GM12878 (cell line): ENCODE measurements at regions of chr7 and their contacts with region 1.

Region 1: GRCh38 chr7:26864309-26865093 is at the start of gene SKAP2:
- DNase-seq: peak; percentile 96
- ATAC-seq: peak; percentile 95
- H3K4me3 ChIP-seq: peak within 1 kb of the TSS; percentile 85
- H3K27ac ChIP-seq: peak within 1 kb of the TSS; percentile 70
- H3K4me1 ChIP-seq: no peaks in the 10 kb centered on the region
- H3K27me3 ChIP-seq: no peaks in the 10 kb centered on the region
- CTCF ChIP-seq: no peak
- EP300 ChIP-seq: no peak
- POLR2A ChIP-seq: peak; percentile 85
- RAD21 ChIP-seq: no peak
- polyA plus RNA-seq, gene SKAP2: 19.9 to 22.2 TPM

Region 2: GRCh38 chr7:25968205-25968993 is 896.1 kb before region 1 on chr7:
- CTCF ChIA-PET with region 1: no interaction called
- POLR2A ChIA-PET with region 1: no interaction called
- RAD21 ChIA-PET with region 1: no interaction called
- SMC1A ChIA-PET with region 1: no interaction called
- in situ Hi-C with region 1: no loop called
- intact Hi-C with region 1: loop called (anchors 5 kb)
- DNase-seq: peak; percentile 98
- ATAC-seq: peak; percentile 75
- H3K4me3 ChIP-seq: peak overlapping the region; percentile 31; the same call in 1 of the 2 replicates
- H3K27ac ChIP-seq: peak overlapping the region; percentile 91
- H3K4me1 ChIP-seq: peaks cover 54% of the 10 kb centered on the region
- H3K27me3 ChIP-seq: no peaks in the 10 kb centered on the region
- CTCF ChIP-seq: peak; percentile 5 to 23 (median 10); a peak in 1 of 6 replicates
- EP300 ChIP-seq: peak; percentile 94 to 95
- POLR2A ChIP-seq: peak; percentile 54; the same call in 1 of the 2 replicates
- RAD21 ChIP-seq: 0 out of 2 replicates have a peak, but pooled peaks have one; percentile 19

Region 3: GRCh38 chr7:26853788-26854393 is 10.6 kb before region 1 on chr7:
- CTCF ChIA-PET with region 1: interaction called, 3 read pairs
- POLR2A ChIA-PET with region 1: no interaction called
- RAD21 ChIA-PET with region 1: interaction called, 14 read pairs
- SMC1A ChIA-PET with region 1: interaction called, 6 read pairs
- in situ Hi-C with region 1: no loop called
- intact Hi-C with region 1: no loop called
- DNase-seq: no peak
- ATAC-seq: no peak
- H3K4me3 ChIP-seq: no peak overlapping the region
- H3K27ac ChIP-seq: no peak overlapping the region
- H3K4me1 ChIP-seq: 0 out of 2 replicates have a peak, but pooled peaks cover 5% of the 10 kb centered on the region
- H3K27me3 ChIP-seq: no peaks in the 10 kb centered on the region
- CTCF ChIP-seq: peak; percentile 27 to 42 (median 31); a peak in 4 of 6 replicates
- EP300 ChIP-seq: no peak
- POLR2A ChIP-seq: no peak
- RAD21 ChIP-seq: peak; percentile 50

Region 4: GRCh38 chr7:27080844-27081436 is 216.4 kb after region 1 on chr7:
- CTCF ChIA-PET with region 1: no interaction called
- POLR2A ChIA-PET with region 1: interaction called, 4 read pairs
- RAD21 ChIA-PET with region 1: interaction called, 9 read pairs
- SMC1A ChIA-PET with region 1: interaction called, 20 read pairs
- in situ Hi-C with region 1: no loop called
- intact Hi-C with region 1: no loop called
- DNase-seq: no peak
- ATAC-seq: no peak
- H3K4me3 ChIP-seq: no peak overlapping the region
- H3K27ac ChIP-seq: no peak overlapping the region
- H3K4me1 ChIP-seq: no peaks in the 10 kb centered on the region
- H3K27me3 ChIP-seq: no peaks in the 10 kb centered on the region
- CTCF ChIP-seq: no peak
- EP300 ChIP-seq: no peak
- POLR2A ChIP-seq: no peak
- RAD21 ChIP-seq: no peak

Region 5: DNA sequence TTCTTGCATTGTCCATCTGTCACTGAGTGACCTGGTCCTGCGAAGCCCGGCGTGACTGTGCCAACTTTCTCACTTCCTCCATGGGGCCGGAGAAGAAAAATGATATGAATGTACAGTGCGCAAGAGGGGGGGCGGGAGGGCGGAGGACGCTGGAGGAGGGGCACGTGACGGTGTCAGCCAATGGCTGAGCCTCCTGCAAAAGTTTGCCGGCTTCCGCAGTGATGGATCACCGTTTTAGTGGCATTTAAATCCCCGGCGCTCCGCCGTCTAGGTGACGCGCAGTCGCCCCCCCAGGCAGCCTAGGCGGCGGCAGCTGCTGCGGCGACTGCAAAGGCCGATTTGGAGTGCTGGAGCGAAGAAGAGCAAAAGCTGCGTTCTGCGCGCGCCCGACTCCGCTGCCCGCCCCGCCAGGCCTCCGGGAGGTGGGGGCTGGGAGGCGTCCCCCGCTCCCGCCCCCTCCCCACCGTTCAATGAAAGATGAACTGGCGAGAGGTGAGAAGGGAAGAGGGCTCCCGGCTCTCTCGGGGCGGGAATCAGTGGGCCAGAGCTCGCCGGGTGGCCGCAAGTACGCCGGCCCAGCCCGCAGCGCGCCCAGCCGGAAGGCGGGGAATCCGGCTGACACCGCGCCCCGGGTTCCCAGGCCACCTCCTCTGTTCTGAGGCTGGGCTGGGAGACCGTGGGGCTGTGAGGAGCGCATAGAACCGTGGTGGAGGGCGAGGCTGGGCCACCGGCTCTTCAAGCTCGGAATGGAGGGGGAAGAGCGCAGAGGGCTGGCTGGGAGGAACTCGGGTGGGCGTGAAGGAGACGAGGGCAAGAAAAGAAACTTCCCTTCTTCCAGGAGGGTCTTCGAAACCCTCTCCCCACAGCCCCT is 231.6 kb after region 1 on chr7 and contains the start of gene HOXA1:
- CTCF ChIA-PET with region 1: interaction called, 4 read pairs
- POLR2A ChIA-PET with region 1: interaction called, 14 read pairs
- RAD21 ChIA-PET with region 1: interaction called, 8 read pairs
- SMC1A ChIA-PET with region 1: interaction called, 4 read pairs
- in situ Hi-C with region 1: no loop called
- intact Hi-C with region 1: no loop called
- DNase-seq: peak; percentile 48
- ATAC-seq: peak; percentile 92
- H3K4me3 ChIP-seq: peak within 1 kb of the TSS; percentile 92
- H3K27ac ChIP-seq: no peak within 1 kb of the TSS
- H3K4me1 ChIP-seq: peaks cover 6% of the 10 kb centered on the region
- H3K27me3 ChIP-seq: peaks cover 0 to 7% of the 10 kb centered on the region in 2 experiments; a peak in 3 of 4 replicates
- CTCF ChIP-seq: no peak; a peak in 1 of 6 replicates
- EP300 ChIP-seq: no peak
- POLR2A ChIP-seq: peak; percentile 65
- RAD21 ChIP-seq: no peak
- polyA plus RNA-seq, gene HOXA1: 0.10 TPM in 1 of 2 experiments, not detected in the other

Region 6: DNA sequence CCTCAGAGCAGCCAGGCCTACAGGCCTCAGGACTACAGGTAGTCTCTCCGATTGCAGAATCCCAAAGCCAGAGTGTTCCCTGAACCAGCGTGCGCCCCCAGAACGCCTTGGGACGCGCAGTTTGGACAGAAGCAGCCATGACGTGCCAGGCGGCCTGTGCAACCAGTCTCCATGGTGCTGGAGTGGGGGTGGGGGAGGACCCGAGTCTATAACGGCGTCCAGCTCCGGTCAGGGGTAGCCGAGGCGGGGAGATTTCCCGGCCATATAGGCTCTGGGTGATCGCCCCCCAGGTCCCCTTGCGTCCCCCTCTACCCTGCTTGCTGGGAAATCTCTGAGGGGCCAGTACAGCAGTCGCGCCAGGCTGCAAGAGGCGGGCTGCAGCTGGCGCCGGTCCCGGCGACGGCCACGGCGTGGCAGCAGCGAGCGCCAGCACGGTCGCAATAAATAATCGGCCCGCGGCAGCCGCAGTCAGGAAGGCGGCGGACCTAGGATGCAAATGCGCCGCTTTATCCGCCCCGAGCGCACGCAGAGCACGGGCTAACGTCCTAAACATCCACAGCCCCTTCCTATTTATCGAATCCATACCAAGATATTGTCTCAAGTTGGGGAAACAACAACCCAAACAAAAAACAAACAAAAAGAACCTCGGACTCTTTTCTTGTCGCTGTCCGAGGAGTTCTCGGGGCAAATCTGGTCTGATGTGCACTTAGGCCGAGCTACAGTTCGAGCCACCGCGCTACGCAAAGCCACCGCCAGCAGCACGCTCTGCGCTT is 286.3 kb after region 1 on chr7:
- CTCF ChIA-PET with region 1: interaction called, 15 read pairs
- POLR2A ChIA-PET with region 1: no interaction called
- RAD21 ChIA-PET with region 1: interaction called, 9 read pairs
- SMC1A ChIA-PET with region 1: interaction called, 10 read pairs
- in situ Hi-C with region 1: no loop called
- intact Hi-C with region 1: no loop called
- DNase-seq: no peak
- ATAC-seq: peak; percentile 96
- H3K4me3 ChIP-seq: peak overlapping the region; percentile 67
- H3K27ac ChIP-seq: no peak overlapping the region
- H3K4me1 ChIP-seq: no peaks in the 10 kb centered on the region; the same call in 1 of the 2 replicates
- H3K27me3 ChIP-seq: peaks cover 20 to 60% of the 10 kb centered on the region in 2 experiments
- CTCF ChIP-seq: peak; percentile 70 to 84 (median 74)
- EP300 ChIP-seq: no peak
- POLR2A ChIP-seq: no peak; the same call in 1 of the 2 replicates
- RAD21 ChIP-seq: peak; percentile 30; the same call in 1 of the 2 replicates